Head of caudate nucleus (tissue), 42 donors: ENCODE measurements at regions of chr4 and their contacts with region 1.

Region 1: GRCh38 chr4:68271851-68272756 is 26.6 kb upstream of the TMPRSS11B start:
- DNase-seq: peak in 5 of 42 donors; percentile 3 to 37 (median 11)

Region 2: GRCh38 chr4:67892905-67893304 is 379.2 kb before region 1 on chr4:
- intact Hi-C with region 1: no loop called
- DNase-seq: no peak

Region 3: DNA sequence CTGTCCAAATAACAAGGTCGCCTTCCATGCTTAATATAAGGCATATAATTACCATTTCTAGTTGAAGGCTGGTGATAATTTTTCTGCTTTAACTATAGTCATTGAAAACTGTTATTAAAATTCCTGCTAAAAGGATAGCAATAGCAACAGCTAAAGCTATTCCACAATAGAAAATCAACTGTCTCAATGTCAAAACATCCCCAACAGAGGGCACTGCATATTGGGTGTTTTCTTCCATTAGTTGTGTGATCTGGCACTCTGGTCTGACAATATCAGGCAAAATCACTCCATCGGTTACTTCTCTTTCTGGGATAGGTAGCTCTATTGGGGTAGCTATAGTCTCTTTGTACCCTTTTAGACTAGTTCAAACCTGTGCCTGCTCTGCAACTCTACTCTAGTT is 195.9 kb before region 1 on chr4:
- intact Hi-C with region 1: no loop called
- DNase-seq: no peak

Region 4: DNA sequence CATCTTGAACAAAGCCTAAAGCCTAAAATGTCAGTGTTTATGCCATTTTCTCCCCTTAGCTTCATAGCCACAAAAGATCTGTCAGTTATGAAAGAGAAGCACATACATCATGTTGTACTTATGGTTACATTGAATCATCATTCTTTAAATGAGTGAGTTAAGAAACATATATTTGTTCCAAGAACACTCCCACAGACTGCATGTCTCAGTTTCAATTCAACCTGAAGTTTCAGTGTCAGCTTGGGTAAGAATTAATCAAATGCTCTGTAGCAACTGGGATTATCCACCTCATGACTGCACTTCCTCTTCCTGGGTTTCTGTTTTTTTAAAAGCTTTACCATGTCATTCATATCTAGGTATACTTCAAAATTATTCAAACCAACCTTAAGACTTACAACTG is 22.7 kb before region 1 on chr4:
- intact Hi-C with region 1: no loop called
- DNase-seq: no peak

Region 5: GRCh38 chr4:68375667-68376559 is 103.8 kb after region 1 on chr4:
- intact Hi-C with region 1: loop called (anchors 5 kb)
- DNase-seq: peak in 33 of 42 donors; percentile 8 to 80 (median 49)